B cell (primary cell): ENCODE measurements at regions of chr12 and their contacts with region 1.

Region 1: DNA sequence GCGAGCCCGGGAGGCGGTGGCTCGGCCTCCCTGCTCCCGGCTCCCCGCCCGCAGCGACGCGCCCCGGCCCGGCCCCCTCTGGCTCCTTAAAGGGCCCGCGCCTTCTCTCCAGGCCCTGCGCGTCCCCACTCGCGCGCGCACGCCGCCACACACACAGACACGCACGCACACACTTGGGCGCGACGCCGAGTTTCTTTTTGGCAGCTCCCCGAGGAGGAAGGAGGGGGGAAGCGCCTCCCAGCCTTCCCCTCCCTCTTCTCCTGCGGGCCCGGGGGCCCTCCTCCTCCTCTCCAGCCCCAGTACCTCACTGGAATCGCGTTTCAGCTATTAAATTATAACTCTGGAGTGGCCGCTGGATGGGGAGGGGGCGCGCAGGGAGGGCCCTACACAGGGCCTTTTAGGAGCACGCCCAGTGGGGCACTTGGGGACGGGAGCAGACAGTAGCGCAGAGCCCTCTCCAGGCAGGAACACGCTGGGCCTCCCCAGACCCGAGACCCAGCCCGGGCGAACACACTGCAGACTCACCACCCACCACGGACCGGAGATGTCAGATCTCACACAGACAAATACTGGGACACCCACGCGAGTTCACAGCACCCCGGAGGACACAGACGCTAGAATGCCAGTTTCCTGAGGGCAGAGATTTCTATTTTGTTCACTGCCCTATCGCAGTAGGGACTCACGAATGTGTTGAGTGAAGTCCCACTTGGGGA is 405 bp upstream of the NCOR2 start:
- DNase-seq: peak; percentile 86
- ATAC-seq: peak; percentile 70
- H3K4me3 ChIP-seq: peak overlapping the region; percentile 30 to 82 (median 65)
- H3K4me3 Mint-ChIP-seq: peak overlapping the region; percentile 86
- H3K27ac ChIP-seq: peak overlapping the region; percentile 38 to 65
- H3K27ac Mint-ChIP-seq: peak overlapping the region; percentile 82
- H3K4me1 ChIP-seq: peaks cover 24 to 43% of the 10 kb centered on the region in 2 donors
- H3K4me1 Mint-ChIP-seq: peaks cover 40% of the 10 kb centered on the region
- H3K27me3 ChIP-seq: no peaks in the 10 kb centered on the region
- H3K27me3 Mint-ChIP-seq: no peaks in the 10 kb centered on the region
- CTCF ChIP-seq: no peak

Region 2: GRCh38 chr12:124391340-124392261 is 176.2 kb before region 1 on chr12:
- CTCF ChIA-PET with region 1: no interaction called
- POLR2A ChIA-PET with region 1: no interaction called
- intact Hi-C with region 1: loop called (anchors 10 kb)
- DNase-seq: peak; percentile 88
- ATAC-seq: peak; percentile 74
- H3K4me3 ChIP-seq: peak overlapping the region; percentile 26 to 63 (median 31)
- H3K4me3 Mint-ChIP-seq: peak overlapping the region; percentile 94
- H3K27ac ChIP-seq: peak overlapping the region; percentile 63 to 86
- H3K27ac Mint-ChIP-seq: peak overlapping the region; percentile 74
- H3K4me1 ChIP-seq: peaks cover 39 to 49% of the 10 kb centered on the region in 2 donors
- H3K4me1 Mint-ChIP-seq: peaks cover 39% of the 10 kb centered on the region
- H3K27me3 ChIP-seq: no peaks in the 10 kb centered on the region
- H3K27me3 Mint-ChIP-seq: no peaks in the 10 kb centered on the region
- CTCF ChIP-seq: no peak

Region 3: DNA sequence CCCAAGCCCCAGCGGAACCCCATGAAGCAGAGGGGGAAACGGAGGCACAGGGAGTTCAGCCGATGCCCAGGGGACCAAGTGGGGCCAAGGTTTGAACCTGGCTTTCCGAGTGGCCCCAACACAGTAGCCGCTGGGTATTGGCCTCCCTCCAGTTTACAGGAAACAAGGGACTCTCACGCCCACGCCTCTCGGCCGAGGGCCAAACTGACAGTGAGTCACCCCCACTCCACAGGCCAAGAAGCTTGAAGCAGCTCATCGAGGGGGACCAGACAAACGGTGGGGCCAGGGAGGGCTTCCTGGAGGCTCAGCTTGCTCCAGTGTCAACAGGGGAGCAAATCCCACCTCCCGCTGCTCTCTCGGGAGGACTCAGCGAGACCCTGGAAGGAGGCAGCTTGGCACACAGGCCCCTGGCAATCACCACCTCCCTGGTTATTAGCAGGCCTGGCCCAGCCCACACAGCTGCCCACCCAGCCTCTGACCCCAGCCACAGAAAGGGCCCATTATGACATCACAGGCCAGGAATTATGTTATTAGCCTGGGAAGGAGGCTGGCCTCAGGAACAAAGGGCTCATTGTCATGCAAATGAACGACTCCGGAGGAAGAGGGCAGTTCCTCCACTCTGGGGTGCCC is 55.0 kb before region 1 on chr12:
- CTCF ChIA-PET with region 1: no interaction called
- POLR2A ChIA-PET with region 1: no interaction called
- intact Hi-C with region 1: no loop called
- DNase-seq: no peak
- ATAC-seq: no peak
- H3K4me3 ChIP-seq: no peak overlapping the region
- H3K4me3 Mint-ChIP-seq: no peak overlapping the region
- H3K27ac ChIP-seq: no peak overlapping the region
- H3K27ac Mint-ChIP-seq: no peak overlapping the region
- H3K4me1 ChIP-seq: peaks cover 0 to 5% of the 10 kb centered on the region in 2 donors
- H3K4me1 Mint-ChIP-seq: peaks cover 24% of the 10 kb centered on the region
- H3K27me3 ChIP-seq: no peaks in the 10 kb centered on the region
- H3K27me3 Mint-ChIP-seq: no peaks in the 10 kb centered on the region
- CTCF ChIP-seq: no peak

Region 4: DNA sequence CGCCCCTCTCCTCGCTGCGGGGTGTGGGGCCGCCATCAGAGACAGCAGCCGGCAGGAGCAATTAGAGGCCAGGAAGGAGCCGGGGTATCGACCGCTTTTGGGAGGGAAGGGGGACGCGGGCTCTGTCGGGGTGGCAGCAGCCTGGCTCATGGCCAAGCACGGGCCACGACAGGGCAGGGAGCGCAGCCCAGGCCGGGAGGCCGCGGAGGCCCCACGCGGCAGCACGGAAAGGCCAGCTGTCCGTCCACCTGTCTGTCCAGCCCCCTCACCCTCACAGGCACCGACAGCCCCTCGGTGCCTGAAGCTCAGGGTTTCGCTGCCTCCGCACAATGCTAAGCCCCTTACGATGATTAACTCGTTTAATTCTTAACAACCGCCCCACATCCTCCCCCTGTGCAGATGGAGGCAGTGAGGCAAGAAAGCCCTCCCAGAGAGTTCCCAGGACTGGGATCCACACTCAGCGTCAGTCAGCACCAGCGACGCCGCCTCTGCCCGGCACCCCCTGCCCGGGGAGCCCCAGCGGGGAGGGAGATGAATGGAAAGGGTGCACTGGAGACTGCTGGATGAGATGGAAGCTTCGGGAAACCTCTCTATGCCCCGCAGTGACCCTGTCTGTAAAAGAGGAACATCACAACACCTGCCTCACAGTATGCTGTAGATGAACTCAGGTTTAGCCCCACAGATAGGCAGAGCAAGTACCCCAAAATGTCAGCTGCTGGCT is 24.1 kb before region 1 on chr12:
- CTCF ChIA-PET with region 1: no interaction called
- POLR2A ChIA-PET with region 1: interaction called, 6 read pairs
- intact Hi-C with region 1: loop called (anchors 1 kb)
- DNase-seq: peak; percentile 61
- ATAC-seq: peak; percentile 40
- H3K4me3 ChIP-seq: no peak overlapping the region
- H3K4me3 Mint-ChIP-seq: peak overlapping the region; percentile 67
- H3K27ac ChIP-seq: peak overlapping the region; percentile 51 to 63
- H3K27ac Mint-ChIP-seq: peak overlapping the region; percentile 63
- H3K4me1 ChIP-seq: peaks cover 42 to 51% of the 10 kb centered on the region in 2 donors
- H3K4me1 Mint-ChIP-seq: peaks cover 62% of the 10 kb centered on the region
- H3K27me3 ChIP-seq: no peaks in the 10 kb centered on the region
- H3K27me3 Mint-ChIP-seq: no peaks in the 10 kb centered on the region
- CTCF ChIP-seq: no peak

Region 5: DNA sequence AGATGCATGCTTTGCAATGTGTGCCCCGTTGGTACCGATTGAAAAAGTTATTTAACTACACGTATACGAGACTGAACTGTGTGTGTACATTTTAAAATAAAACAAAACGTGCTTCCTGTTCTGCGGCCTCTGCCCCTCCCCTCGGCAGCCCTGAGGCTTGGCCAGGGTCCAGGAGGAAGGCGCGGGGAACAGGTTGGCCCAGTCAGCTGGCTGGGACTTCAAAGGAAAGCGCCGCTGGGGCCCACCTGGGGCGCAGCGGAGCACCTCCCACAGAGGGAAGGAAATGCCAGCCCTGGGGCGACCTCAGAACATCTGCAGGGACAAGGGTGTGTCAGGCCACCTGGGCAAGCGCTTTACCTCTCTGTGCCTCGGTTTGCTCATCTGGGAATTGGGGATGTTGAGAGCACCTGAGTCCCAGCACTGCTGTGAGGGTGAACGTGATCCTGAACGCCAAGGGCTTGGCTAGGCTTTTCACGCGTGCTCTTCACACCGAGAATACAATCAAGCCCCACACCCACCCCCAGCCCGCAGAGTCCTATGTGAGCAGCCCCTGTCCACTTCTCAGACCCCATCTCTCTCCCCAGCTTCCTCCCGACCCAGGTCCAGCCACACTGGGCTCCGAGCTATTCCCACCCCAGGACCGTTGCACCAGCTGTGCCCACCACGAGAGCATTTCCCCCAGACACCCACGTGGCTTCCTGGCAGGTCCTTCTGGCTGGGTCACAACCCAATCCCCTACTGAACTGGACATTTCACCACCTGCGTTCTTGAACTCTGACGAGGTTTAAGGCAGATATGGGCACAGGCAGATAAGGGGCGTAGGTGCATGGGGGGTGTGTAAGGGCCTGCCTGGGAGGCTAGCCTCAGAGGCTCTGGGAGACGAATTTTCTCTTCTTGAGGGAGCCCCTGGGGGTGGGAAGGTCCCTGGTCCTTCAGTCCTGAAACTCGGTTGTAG is 41.5 kb after region 1 on chr12:
- CTCF ChIA-PET with region 1: no interaction called
- POLR2A ChIA-PET with region 1: no interaction called
- intact Hi-C with region 1: loop called (anchors 1 kb)
- DNase-seq: peak; percentile 81
- ATAC-seq: peak; percentile 83
- H3K4me3 ChIP-seq: peak overlapping the region in 3 of 5 experiments; percentile 12 to 53 (median 23)
- H3K4me3 Mint-ChIP-seq: peak overlapping the region; percentile 62
- H3K27ac ChIP-seq: peak overlapping the region in 1 of 2 donors; percentile 8
- H3K27ac Mint-ChIP-seq: peak overlapping the region; percentile 67
- H3K4me1 ChIP-seq: peaks cover 29 to 30% of the 10 kb centered on the region in 2 donors
- H3K4me1 Mint-ChIP-seq: peaks cover 27% of the 10 kb centered on the region
- H3K27me3 ChIP-seq: peaks cover 0 to 4% (median 0%) of the 10 kb centered on the region in 4 experiments
- H3K27me3 Mint-ChIP-seq: peaks cover 10% of the 10 kb centered on the region
- CTCF ChIP-seq: no peak

Region 6: DNA sequence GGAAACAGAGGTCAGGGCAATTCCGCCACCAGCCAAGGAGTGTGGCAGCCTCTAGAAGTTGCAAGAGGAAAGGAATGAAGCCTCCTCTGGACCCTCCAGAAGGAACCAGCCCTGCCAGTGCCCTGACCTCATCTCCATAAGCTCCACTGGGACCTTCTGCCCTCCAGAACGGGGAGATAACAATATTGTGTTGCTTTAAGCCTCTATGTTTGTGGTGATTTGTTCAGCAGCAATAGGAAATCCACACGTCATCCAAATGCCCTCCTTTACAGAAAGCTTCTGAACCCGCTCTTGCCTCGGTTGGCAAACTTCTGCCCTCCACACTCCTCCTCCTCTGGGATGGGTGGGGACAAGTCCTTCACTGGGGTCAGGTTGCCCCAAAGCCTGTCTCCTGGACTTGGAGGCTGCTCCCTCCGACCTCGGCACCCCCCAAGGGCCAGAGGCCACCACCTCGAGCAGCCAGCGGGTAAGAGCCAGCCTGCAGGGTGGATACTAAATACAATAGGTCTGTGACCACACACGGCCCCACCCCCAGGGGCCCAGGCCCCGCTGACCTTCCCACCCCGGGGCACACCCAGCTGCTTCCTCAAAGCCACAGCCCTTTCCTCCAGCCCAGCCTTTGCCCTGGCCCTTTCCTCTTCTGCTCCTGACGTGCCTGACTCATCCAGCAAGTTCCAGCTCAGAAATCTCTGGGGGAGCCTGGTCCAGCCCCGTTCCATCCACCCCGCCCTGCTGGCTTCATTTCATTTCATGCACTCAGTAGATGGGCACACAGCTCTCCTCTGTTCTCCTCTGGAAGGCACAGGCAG is 58.3 kb after region 1 on chr12:
- CTCF ChIA-PET with region 1: no interaction called
- POLR2A ChIA-PET with region 1: no interaction called
- intact Hi-C with region 1: no loop called
- DNase-seq: no peak
- ATAC-seq: no peak
- H3K4me3 ChIP-seq: no peak overlapping the region
- H3K4me3 Mint-ChIP-seq: no peak overlapping the region
- H3K27ac ChIP-seq: no peak overlapping the region
- H3K27ac Mint-ChIP-seq: no peak overlapping the region
- H3K4me1 ChIP-seq: no peaks in the 10 kb centered on the region
- H3K4me1 Mint-ChIP-seq: no peaks in the 10 kb centered on the region
- H3K27me3 ChIP-seq: no peaks in the 10 kb centered on the region
- H3K27me3 Mint-ChIP-seq: no peaks in the 10 kb centered on the region
- CTCF ChIP-seq: no peak

Region 7: DNA sequence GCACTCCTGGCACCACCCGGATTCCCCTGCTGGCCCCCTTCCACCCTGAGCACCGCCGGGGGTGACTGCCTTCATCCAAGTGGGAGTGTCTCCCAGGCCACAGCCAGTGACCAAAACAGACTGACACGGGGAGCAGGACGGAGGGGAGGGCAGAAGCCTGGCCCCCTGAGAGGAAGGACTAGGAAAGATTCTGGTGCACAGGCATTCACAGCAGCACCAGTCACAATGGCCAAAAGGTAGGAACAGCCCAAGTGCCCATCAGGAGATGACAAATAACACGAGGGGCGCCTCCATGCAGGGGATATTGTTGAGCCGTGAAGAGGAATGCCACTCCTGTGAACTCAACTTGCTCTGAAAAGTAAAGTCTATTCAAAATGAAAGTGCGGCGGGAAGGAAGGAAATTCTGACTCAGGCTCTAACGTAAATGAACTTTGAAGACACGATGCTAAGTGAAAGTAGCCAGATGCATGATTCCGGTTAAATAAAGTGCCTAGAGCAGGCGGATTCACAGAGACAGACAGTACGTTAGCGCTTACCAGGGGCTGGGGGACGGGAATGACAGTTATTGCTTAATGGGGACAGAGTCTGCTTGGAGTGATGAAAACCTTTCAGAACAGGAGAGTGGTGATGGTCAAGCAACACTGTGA is 145.7 kb after region 1 on chr12:
- CTCF ChIA-PET with region 1: no interaction called
- POLR2A ChIA-PET with region 1: no interaction called
- intact Hi-C with region 1: loop called (anchors 5 kb)
- DNase-seq: peak; percentile 65
- ATAC-seq: peak; percentile 80
- H3K4me3 ChIP-seq: peak overlapping the region in 3 of 5 experiments; percentile 41 to 72 (median 49)
- H3K4me3 Mint-ChIP-seq: peak overlapping the region; percentile 73
- H3K27ac ChIP-seq: peak overlapping the region; percentile 52 to 76
- H3K27ac Mint-ChIP-seq: peak overlapping the region; percentile 70
- H3K4me1 ChIP-seq: peaks cover 16 to 17% of the 10 kb centered on the region in 2 donors
- H3K4me1 Mint-ChIP-seq: peaks cover 16% of the 10 kb centered on the region
- H3K27me3 ChIP-seq: no peaks in the 10 kb centered on the region
- H3K27me3 Mint-ChIP-seq: no peaks in the 10 kb centered on the region
- CTCF ChIP-seq: no peak

Region 8: GRCh38 chr12:124774462-124775167 is 206.8 kb after region 1 on chr12:
- CTCF ChIA-PET with region 1: no interaction called
- POLR2A ChIA-PET with region 1: no interaction called
- intact Hi-C with region 1: loop called (anchors 2 kb)
- DNase-seq: peak; percentile 69
- ATAC-seq: peak; percentile 72
- H3K4me3 ChIP-seq: peak overlapping the region in 4 of 5 experiments; percentile 15 to 40 (median 32)
- H3K4me3 Mint-ChIP-seq: peak overlapping the region; percentile 67
- H3K27ac ChIP-seq: no peak overlapping the region
- H3K27ac Mint-ChIP-seq: peak overlapping the region; percentile 2
- H3K4me1 ChIP-seq: peaks cover 25 to 31% of the 10 kb centered on the region in 2 donors
- H3K4me1 Mint-ChIP-seq: peaks cover 30% of the 10 kb centered on the region
- H3K27me3 ChIP-seq: peaks cover 0 to 11% (median 4%) of the 10 kb centered on the region in 4 experiments
- H3K27me3 Mint-ChIP-seq: peaks cover 16% of the 10 kb centered on the region
- CTCF ChIP-seq: no peak

Region 9: GRCh38 chr12:124927201-124928094 is 359.6 kb after region 1 on chr12:
- CTCF ChIA-PET with region 1: no interaction called
- POLR2A ChIA-PET with region 1: no interaction called
- intact Hi-C with region 1: loop called (anchors 10 kb)
- DNase-seq: peak; percentile 94
- ATAC-seq: peak; percentile 88
- H3K4me3 ChIP-seq: peak overlapping the region; percentile 69 to 91 (median 77)
- H3K4me3 Mint-ChIP-seq: peak overlapping the region; percentile 93
- H3K27ac ChIP-seq: peak overlapping the region; percentile 43 to 50
- H3K27ac Mint-ChIP-seq: peak overlapping the region; percentile 99
- H3K4me1 ChIP-seq: peaks cover 16 to 24% of the 10 kb centered on the region in 2 donors
- H3K4me1 Mint-ChIP-seq: peaks cover 29% of the 10 kb centered on the region
- H3K27me3 ChIP-seq: no peaks in the 10 kb centered on the region
- H3K27me3 Mint-ChIP-seq: no peaks in the 10 kb centered on the region
- CTCF ChIP-seq: no peak